Activated CD4-positive, alpha-beta T cell treated with anti-CD3 and anti-CD28 coated beads for 36 hours (primary cell): ENCODE measurements at regions of chr1 and their contacts with region 1.

Region 1: GRCh38 chr1:31548907-31549808 is 27.2 kb upstream of the TINAGL1 start:
- DNase-seq: peak; percentile 93
- ATAC-seq: peak; percentile 91
- H3K4me3 Mint-ChIP-seq: peak overlapping the region; percentile 49
- H3K27ac Mint-ChIP-seq: peak overlapping the region; percentile 71
- H3K4me1 Mint-ChIP-seq: peaks cover 9% of the 10 kb centered on the region
- H3K27me3 Mint-ChIP-seq: peaks cover 8% of the 10 kb centered on the region

Region 2: DNA sequence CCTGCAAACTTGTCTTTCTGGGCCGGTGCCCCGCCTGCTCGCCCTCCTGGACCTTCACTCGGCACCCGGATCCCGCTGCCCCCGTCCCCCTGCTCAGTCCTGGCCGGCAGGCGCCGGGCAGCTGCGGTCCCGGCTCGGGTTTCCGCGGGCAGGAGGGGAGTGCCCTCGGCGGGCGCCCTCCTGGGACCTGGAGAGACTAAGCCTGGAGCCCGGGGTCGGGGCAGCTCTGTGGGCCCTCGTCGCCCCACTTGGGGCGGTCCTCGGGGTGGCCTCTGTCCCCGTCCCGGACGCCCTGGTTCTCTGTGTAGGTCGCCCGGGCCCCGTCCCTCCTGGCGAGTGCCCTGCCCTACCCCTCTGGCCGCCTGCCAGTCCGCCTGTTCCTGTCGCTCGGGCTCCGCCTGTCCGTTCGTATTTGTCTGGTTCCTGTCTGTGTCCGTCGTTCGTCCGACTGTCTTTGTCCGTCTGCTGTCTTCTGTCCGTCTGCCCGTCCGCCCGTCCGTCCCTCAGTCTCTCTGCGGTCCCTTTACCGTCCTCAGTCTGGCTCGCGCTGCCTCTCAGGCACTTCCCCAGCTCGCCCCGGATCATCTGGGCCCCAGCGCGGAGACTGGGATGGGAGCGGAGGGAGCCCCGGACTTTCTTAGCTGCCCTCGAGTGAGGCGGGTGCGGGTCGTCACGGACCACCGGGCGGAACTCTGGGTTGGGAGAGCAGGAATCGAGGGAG is 135.6 kb before region 1 on chr1:
- CTCF ChIA-PET with region 1: interaction called, 10 read pairs
- POLR2A ChIA-PET with region 1: no interaction called
- intact Hi-C with region 1: no loop called
- DNase-seq: peak; percentile 40
- ATAC-seq: peak; percentile 53
- H3K4me3 Mint-ChIP-seq: peak overlapping the region; percentile 73
- H3K27ac Mint-ChIP-seq: no peak overlapping the region
- H3K4me1 Mint-ChIP-seq: peaks cover 8% of the 10 kb centered on the region
- H3K27me3 Mint-ChIP-seq: peaks cover 55% of the 10 kb centered on the region

Region 3: DNA sequence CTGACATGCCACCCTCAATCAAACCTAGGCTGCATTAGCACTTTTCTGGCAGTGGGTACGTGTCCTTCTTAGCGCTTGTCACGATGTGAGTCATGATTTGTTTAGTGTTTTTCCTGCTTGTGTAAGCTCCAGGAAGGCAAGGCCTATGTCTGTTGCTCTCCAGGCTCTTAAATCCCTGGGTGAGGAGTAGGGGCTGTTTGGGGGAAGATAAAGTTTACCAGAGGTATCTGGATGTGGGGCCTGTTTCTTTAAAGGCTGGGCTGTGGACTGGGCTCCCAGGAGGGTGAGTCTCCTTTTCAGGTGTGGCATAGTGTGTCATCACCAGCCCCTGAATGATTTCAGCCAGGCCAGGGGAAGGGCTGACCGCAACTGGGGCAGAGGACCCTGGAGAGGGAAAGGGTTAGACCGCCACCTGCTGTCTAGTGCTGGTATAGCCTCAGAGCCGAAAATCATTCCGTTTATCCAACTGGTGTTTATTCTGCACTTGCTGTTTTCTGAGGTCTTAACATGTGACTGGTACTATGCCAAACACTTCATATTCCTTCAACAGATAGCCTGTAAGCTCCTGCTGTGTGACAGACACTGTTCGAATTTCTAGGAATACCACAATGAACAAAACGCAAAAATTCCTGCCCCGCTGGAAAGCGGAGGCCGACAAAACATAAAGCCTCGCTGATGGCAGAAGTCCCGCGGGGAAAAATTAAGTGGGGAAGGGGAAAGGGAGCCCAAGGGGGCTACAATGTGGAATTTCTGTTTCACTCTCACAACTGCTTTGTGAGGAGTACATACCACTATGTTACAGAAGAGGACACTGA is 126.4 kb before region 1 on chr1:
- CTCF ChIA-PET with region 1: interaction called, 11 read pairs
- POLR2A ChIA-PET with region 1: no interaction called
- intact Hi-C with region 1: loop called (anchors 1 to 2 kb)
- DNase-seq: peak; percentile 84
- ATAC-seq: peak; percentile 89
- H3K4me3 Mint-ChIP-seq: no peak overlapping the region
- H3K27ac Mint-ChIP-seq: no peak overlapping the region
- H3K4me1 Mint-ChIP-seq: no peaks in the 10 kb centered on the region
- H3K27me3 Mint-ChIP-seq: peaks cover 14% of the 10 kb centered on the region

Region 4: GRCh38 chr1:31460027-31460426 is 89.1 kb before region 1 on chr1:
- CTCF ChIA-PET with region 1: interaction called, 4 read pairs
- POLR2A ChIA-PET with region 1: no interaction called
- intact Hi-C with region 1: loop called in 1 of 2 experiments (anchors 1 kb)
- DNase-seq: no peak
- ATAC-seq: no peak
- H3K4me3 Mint-ChIP-seq: no peak overlapping the region
- H3K27ac Mint-ChIP-seq: no peak overlapping the region
- H3K4me1 Mint-ChIP-seq: no peaks in the 10 kb centered on the region
- H3K27me3 Mint-ChIP-seq: peaks cover 14% of the 10 kb centered on the region